Heart right ventricle (tissue), 16 donors: ENCODE measurements at regions of chr14 and their contacts with region 1.

Region 1: GRCh38 chr14:100142073-100143040 is 17.1 kb downstream of the DEGS2 start:
- DNase-seq: peak; percentile 52 to 80
- ATAC-seq: peak; percentile 57 to 92 (median 79)
- H3K4me3 ChIP-seq: peak overlapping the region in 1 of 10 donors; percentile 13
- H3K27ac ChIP-seq: peak overlapping the region in 9 of 10 donors; percentile 53 to 86 (median 71)
- H3K4me1 ChIP-seq: peaks cover 16 to 45% (median 39%) of the 10 kb centered on the region in 9 donors
- H3K27me3 ChIP-seq: no peaks in the 10 kb centered on the region
- CTCF ChIP-seq: no peak

Region 2: DNA sequence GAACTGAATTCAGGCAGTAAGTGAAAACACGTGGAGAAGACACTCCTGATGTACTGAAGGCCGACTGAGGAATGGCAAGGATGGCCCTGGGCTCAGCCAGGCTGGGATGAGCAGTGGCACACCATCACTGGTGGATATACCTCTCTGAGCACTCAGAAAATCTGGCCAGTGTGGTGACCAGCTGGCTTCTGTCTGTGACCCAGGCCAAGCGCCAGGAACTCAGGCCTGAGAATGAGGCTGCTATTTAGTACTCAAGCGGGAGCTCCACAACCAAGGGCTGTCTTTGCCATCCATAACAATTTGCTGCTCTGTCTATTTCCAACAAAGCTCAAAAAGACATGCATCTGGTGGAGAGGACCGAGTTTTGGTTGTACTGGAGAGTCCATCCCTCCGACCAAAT is 1456.6 kb before region 1 on chr14:
- intact Hi-C with region 1: no loop called
- DNase-seq: no peak
- ATAC-seq: no peak
- H3K4me3 ChIP-seq: no peak overlapping the region
- H3K27ac ChIP-seq: no peak overlapping the region
- H3K4me1 ChIP-seq: no peaks in the 10 kb centered on the region
- H3K27me3 ChIP-seq: peaks cover 0 to 9% (median 0%) of the 10 kb centered on the region in 7 donors
- CTCF ChIP-seq: no peak

Region 3: DNA sequence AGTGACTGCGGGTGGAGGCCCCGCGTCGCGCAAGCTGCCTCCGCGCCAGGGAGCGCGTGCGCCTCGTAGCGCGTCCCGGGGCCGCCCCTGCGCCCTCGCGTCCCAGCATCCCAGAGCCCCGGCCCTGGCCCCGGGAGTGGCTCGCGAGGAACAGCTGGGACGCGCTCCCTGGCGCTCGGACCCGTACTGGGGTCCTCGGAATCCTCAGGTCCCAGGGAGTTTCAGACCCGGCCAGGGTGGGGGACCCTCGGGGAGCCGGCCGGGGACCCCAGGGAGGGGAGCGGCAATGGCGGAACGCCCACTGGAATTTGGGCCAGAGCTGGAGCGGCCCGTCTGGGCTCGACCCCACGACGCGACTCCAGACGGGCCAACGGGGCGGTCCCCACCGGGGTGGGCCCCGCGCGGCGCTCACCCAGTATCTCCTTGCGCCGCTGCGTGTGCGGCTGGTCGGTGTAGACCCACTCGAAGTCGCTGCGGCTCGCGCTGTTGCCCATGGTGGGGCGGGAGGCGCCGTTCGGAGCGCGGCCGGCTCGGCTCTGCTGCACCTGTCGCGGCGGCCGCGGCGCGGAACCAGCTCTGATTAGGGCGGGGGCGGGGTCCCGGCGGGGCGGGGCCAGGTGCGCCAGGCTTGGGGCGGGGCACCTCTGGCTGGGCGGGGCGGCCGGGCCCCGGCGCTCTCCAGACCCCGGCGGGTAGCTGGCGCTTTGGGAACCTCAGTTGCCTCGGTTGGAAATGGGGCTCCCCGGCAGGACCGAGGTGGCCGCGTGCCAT is 16.9 kb after region 1 on chr14 and contains the start of gene DEGS2:
- intact Hi-C with region 1: loop called in 1 of 10 experiments (anchors 1 kb)
- DNase-seq: no peak
- ATAC-seq: peak in 4 of 8 donors; percentile 17 to 55 (median 27)
- H3K4me3 ChIP-seq: peak within 1 kb of the TSS; percentile 21 to 51 (median 40)
- H3K27ac ChIP-seq: no peak within 1 kb of the TSS
- H3K4me1 ChIP-seq: peaks cover 0 to 16% (median 14%) of the 10 kb centered on the region in 9 donors
- H3K27me3 ChIP-seq: peaks cover 10 to 51% (median 47%) of the 10 kb centered on the region in 7 donors
- CTCF ChIP-seq: no peak
- total RNA-seq, gene DEGS2: 0.04 to 0.20 (median 0.10) TPM in 4 of 10 donors, not detected in the others